Right lobe of liver (tissue), 6 donors: ENCODE measurements at regions of chr17 and their contacts with region 1.

Region 1: GRCh38 chr17:51371732-51372151 is 111.4 kb downstream of the UTP18 start:
- DNase-seq: peak in 2 of 3 donors; percentile 29 to 59
- ATAC-seq: peak; percentile 87 to 96 (median 94)
- H3K4me3 ChIP-seq: no peak overlapping the region
- H3K27ac ChIP-seq: no peak overlapping the region
- H3K4me1 ChIP-seq: no peaks in the 10 kb centered on the region
- H3K27me3 ChIP-seq: no peaks in the 10 kb centered on the region
- CTCF ChIP-seq: peak; percentile 58 to 74 (median 68)
- POLR2A ChIP-seq: no peak

Region 2: DNA sequence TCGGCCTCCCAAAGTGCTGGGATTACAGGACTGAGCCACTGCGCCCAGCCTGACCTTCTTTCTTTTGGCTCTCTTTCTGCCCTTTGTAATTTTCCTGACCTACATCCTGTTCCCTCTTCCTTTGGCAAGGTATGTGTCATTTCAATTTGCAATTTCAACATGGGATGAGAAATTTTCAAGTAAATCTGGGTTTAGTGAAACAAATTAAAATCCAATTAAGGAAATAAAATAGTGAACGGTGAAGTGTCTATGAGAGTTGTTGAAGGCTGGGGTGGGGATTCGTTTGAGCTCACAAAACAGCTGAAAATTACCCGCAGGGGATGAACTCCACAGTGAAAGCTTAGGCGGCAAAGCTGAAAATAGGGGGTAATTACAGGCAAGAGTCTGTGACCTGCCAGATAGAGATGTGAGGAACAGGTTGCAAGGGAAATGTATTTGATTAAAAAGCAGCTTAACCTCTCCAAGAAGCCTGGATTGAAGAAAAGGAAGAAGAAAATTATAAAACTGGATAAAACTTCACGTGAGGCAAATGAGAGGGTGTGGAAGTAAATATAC is 166.3 kb after region 1 on chr17:
- intact Hi-C with region 1: loop called (anchors 5 to 10 kb)
- DNase-seq: no peak
- ATAC-seq: no peak
- H3K4me3 ChIP-seq: no peak overlapping the region
- H3K27ac ChIP-seq: no peak overlapping the region
- H3K4me1 ChIP-seq: no peaks in the 10 kb centered on the region
- H3K27me3 ChIP-seq: no peaks in the 10 kb centered on the region
- CTCF ChIP-seq: no peak
- POLR2A ChIP-seq: no peak